Activated T-helper 2 cell treated with anti-CD3 and anti-CD28 coated beads, Interferon-gamma antibody, Interleukin-2, Interleukin-4, amounts not matched to agents 10 μg/mL and 5 μg/mL and 100 μg/mL, durations not matched to agents 14 hours and 24 hours and 36 hours (primary cell): ENCODE measurements at regions of chr5 and their contacts with region 1.

Region 1: GRCh38 chr5:131322926-131323325 is 59.1 kb downstream of the CDC42SE2 start:
- DNase-seq: no peak
- H3K4me3 Mint-ChIP-seq: no peak overlapping the region
- H3K27ac Mint-ChIP-seq: peak overlapping the region; percentile 11
- H3K4me1 Mint-ChIP-seq: peaks cover 40% of the 10 kb centered on the region
- H3K27me3 Mint-ChIP-seq: no peaks in the 10 kb centered on the region

Region 2: GRCh38 chr5:131357739-131358561 is 35.0 kb after region 1 on chr5:
- intact Hi-C with region 1: loop called (anchors 1 kb)
- DNase-seq: no peak
- H3K4me3 Mint-ChIP-seq: peak overlapping the region; percentile 41
- H3K27ac Mint-ChIP-seq: peak overlapping the region; percentile 90
- H3K4me1 Mint-ChIP-seq: peaks cover 48% of the 10 kb centered on the region
- H3K27me3 Mint-ChIP-seq: no peaks in the 10 kb centered on the region